Caki2 (cell line): ENCODE measurements at regions of chr17 and their contacts with region 1.

Region 1: DNA sequence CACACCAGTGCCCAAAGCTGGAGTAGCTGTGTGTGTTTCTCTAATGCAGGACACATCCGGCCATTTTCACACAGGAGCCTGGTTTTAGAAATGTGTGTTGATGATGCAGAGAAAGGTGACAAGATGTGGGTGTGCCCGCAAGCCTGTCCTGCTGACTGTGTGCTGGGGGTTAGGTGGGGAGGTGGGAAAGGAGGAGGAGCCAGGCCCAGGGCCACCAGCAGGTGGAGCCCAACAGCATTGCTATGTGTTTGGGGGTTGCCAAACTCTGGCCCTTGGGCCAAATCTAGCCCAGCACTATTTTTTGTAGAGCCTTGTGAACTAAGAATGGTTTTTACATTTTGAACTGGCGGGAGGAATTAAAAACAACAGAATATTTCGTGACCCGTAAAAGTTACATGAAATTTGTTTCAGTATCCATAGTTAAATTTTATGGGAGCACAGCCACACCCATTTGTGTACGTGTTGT is 61.7 kb upstream of the LGALS9 start:
- DNase-seq: peak; percentile 31

Region 2: DNA sequence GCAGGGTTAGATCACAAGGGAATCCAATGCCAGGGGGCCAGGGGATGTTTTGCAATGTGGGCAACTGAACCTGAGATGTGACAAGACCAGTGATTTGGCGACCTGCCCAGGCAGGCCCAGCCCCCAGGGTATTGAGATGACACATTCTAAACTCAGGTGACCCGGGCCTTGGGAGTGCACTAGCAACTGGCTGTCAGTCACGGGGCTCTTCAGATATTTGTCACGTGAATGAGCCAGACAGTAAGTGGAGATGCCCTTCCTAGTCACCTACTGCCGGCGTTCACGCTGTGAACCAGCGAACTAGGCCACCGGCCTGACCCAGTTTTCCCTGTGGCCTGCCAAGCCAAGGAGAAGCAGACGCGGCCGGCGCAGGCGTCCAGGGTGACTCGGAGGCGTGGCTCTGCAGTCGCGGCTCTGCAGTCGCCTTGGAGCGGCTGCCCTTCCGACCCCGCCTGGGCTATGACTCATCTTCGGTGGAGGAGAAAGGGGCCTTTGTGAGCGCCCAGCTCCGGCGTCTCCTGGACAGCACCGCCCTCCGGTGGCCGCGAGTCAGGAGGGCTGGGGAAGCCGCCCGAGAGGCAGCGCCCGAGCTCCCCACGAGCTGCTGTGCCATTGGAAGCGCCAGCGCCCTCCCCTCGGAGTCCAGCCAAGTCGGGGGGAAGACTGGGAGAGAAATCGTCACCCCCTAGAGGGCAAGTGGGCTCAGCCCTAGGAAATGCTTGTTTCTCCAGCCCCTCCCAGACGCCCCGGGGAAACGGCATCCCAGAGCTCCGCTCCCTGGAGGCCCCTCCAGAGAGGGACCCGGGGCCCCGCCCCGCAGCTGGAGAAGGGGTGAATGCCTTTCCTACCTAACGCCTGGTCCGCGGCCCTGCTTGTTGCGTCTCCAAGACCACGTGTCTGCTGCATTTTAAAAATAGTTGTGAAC is 236.5 kb before region 1 on chr17:
- in situ Hi-C with region 1: loop called (anchors 25 kb)
- DNase-seq: peak; percentile 100